ENCODE measurements at regions of chr4 and their contacts with region 1.

Region 1: GRCh38 chr4:87838890-87839591 is 6.3 kb downstream of the MEPE start:
- DNase-seq: no peak
- ATAC-seq: no peak
- H3K4me3 Mint-ChIP-seq: no peak overlapping the region
- H3K27ac Mint-ChIP-seq: no peak overlapping the region
- H3K4me1 Mint-ChIP-seq: no peaks in the 10 kb centered on the region
- H3K27me3 Mint-ChIP-seq: peaks cover 11% of the 10 kb centered on the region
- CTCF ChIP-seq: no peak

Region 2: DNA sequence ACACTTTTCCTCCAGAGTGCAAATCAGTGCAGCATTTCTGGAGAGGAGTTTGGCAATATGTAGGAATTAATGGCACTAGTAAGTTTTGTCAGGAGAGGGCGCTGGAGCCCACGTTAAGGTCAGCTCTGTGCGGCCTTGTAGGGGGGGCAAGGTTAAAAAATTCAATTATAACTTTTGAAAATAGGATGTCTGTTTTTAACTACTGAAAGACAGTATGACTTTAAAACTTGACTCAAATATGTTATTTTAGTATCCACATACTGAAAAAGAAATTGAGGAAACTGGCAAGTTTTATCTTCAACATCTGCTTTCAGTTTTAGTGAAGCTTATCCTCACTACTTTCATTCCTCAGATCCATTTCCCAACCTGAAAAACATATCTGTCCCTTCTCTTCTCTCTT is 485.4 kb before region 1 on chr4:
- CTCF ChIA-PET with region 1: no interaction called
- POLR2A ChIA-PET with region 1: no interaction called
- intact Hi-C with region 1: loop called (anchors 2 kb)
- DNase-seq: no peak
- ATAC-seq: no peak
- H3K4me3 Mint-ChIP-seq: no peak overlapping the region
- H3K27ac Mint-ChIP-seq: no peak overlapping the region
- H3K4me1 Mint-ChIP-seq: no peaks in the 10 kb centered on the region
- H3K27me3 Mint-ChIP-seq: no peaks in the 10 kb centered on the region
- CTCF ChIP-seq: no peak

Region 3: DNA sequence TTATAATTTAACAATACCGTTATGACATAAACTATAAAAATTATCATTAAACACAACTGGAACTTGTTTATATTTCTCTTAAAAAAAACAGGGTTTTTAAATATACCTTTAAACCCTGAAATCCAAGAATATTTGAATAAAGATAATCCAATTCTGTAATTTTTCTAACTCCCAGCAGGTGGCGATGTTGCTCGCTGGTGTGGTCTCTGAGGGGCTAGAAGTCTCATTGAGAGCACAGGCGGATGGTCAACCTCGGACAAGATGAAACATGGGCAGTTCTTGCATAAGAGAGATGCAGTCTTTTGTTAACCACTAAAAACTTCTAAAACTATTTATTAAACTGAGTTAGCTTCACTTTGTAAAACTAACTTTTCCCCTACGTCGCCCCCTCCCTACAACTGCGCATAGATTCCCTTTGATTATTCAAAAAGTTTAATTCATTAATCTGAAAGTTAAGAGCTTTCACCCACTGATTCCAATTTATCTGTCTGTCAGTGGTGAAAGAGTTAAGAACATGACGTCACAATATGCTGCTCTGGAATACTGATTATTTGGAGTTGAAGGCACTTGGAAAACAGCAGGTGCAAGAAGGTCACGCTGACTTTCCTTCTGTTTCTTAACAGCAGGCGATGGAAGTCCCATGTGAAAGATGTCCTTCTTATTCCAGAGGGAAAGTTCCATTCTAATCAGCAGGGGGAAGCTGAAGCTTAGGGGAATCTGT is 159.4 kb before region 1 on chr4:
- CTCF ChIA-PET with region 1: no interaction called
- POLR2A ChIA-PET with region 1: no interaction called
- intact Hi-C with region 1: loop called (anchors 2 kb)
- DNase-seq: no peak
- ATAC-seq: no peak
- H3K4me3 Mint-ChIP-seq: no peak overlapping the region
- H3K27ac Mint-ChIP-seq: no peak overlapping the region
- H3K4me1 Mint-ChIP-seq: no peaks in the 10 kb centered on the region
- H3K27me3 Mint-ChIP-seq: no peaks in the 10 kb centered on the region
- CTCF ChIP-seq: peak; percentile 61